ENCODE measurements at regions of chr16 and their contacts with region 1.

Region 1: DNA sequence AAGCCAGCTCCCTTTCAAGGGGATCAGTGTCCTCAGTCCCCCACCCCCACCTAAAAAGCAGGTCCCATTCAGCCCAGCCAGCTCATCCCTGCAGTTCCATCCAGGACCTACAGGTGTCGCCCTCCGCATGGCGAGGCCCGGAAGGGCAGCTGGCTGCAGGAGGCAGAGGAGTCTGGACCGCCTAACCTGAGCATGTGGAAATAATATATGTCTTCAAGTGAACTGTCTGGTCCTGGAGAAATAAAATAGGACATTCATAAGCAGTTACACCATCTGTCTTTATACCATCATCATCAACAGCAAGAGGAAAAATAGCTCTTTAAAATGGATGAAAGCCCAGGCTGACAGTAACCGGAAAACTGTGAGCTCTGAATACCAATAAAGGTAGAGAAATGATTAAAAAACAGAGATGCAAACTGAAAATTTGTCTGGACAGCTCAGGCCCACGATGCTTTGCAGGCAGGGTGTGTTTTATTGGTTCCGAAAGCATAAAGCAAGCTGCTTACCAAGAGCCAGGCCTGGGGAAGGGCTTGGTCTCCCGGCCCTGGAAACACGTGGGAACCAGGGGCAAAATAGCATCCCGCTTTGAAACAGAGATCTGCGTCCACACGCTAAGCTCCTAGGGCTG is 215.2 kb downstream of the ZFHX3 start:
- DNase-seq: peak; percentile 52
- H3K4me3 ChIP-seq: no peak overlapping the region
- H3K27ac ChIP-seq: no peak overlapping the region
- H3K4me1 ChIP-seq: peaks cover 6% of the 10 kb centered on the region
- H3K27me3 ChIP-seq: no peaks in the 10 kb centered on the region
- CTCF ChIP-seq: peak; percentile 98 to 99

Region 2: GRCh38 chr16:72241930-72242329 is 590.8 kb before region 1 on chr16:
- CTCF ChIA-PET with region 1: no interaction called
- dilution Hi-C with region 1: no loop called
- in situ Hi-C with region 1: no loop called
- intact Hi-C with region 1: loop called (anchors 5 kb)
- DNase-seq: peak; percentile 48
- H3K4me3 ChIP-seq: no peak overlapping the region
- H3K27ac ChIP-seq: no peak overlapping the region
- H3K4me1 ChIP-seq: peaks cover 4% of the 10 kb centered on the region
- H3K27me3 ChIP-seq: no peaks in the 10 kb centered on the region
- CTCF ChIP-seq: peak; percentile 94 to 97

Region 3: GRCh38 chr16:72764015-72764654 is 68.6 kb before region 1 on chr16:
- CTCF ChIA-PET with region 1: no interaction called
- dilution Hi-C with region 1: no loop called
- in situ Hi-C with region 1: no loop called
- intact Hi-C with region 1: no loop called
- DNase-seq: no peak
- H3K4me3 ChIP-seq: no peak overlapping the region
- H3K27ac ChIP-seq: no peak overlapping the region
- H3K4me1 ChIP-seq: no peaks in the 10 kb centered on the region
- H3K27me3 ChIP-seq: no peaks in the 10 kb centered on the region
- CTCF ChIP-seq: no peak

Region 4: GRCh38 chr16:72961121-72961763 is 128.5 kb after region 1 on chr16:
- CTCF ChIA-PET with region 1: no interaction called
- dilution Hi-C with region 1: no loop called
- in situ Hi-C with region 1: no loop called
- intact Hi-C with region 1: loop called (anchors 5 kb)
- DNase-seq: no peak
- H3K4me3 ChIP-seq: no peak overlapping the region
- H3K27ac ChIP-seq: no peak overlapping the region
- H3K4me1 ChIP-seq: no peaks in the 10 kb centered on the region
- H3K27me3 ChIP-seq: no peaks in the 10 kb centered on the region
- CTCF ChIP-seq: peak; percentile 42 to 46

Region 5: GRCh38 chr16:73010150-73010676 is 177.5 kb after region 1 on chr16:
- CTCF ChIA-PET with region 1: interaction called, 15 read pairs
- dilution Hi-C with region 1: no loop called
- in situ Hi-C with region 1: no loop called
- intact Hi-C with region 1: no loop called
- DNase-seq: no peak
- H3K4me3 ChIP-seq: no peak overlapping the region
- H3K27ac ChIP-seq: no peak overlapping the region
- H3K4me1 ChIP-seq: peaks cover 1% of the 10 kb centered on the region
- H3K27me3 ChIP-seq: no peaks in the 10 kb centered on the region
- CTCF ChIP-seq: no peak

Region 6: GRCh38 chr16:73058221-73058615 is 225.5 kb after region 1 on chr16:
- CTCF ChIA-PET with region 1: interaction called, 5 read pairs
- dilution Hi-C with region 1: no loop called
- in situ Hi-C with region 1: no loop called
- intact Hi-C with region 1: loop called (anchors 2 kb)
- DNase-seq: peak; percentile 54
- H3K4me3 ChIP-seq: peak overlapping the region; percentile 55 to 64 (median 61)
- H3K27ac ChIP-seq: no peak overlapping the region
- H3K4me1 ChIP-seq: peaks cover 47% of the 10 kb centered on the region
- H3K27me3 ChIP-seq: no peaks in the 10 kb centered on the region
- CTCF ChIP-seq: no peak

Region 7: DNA sequence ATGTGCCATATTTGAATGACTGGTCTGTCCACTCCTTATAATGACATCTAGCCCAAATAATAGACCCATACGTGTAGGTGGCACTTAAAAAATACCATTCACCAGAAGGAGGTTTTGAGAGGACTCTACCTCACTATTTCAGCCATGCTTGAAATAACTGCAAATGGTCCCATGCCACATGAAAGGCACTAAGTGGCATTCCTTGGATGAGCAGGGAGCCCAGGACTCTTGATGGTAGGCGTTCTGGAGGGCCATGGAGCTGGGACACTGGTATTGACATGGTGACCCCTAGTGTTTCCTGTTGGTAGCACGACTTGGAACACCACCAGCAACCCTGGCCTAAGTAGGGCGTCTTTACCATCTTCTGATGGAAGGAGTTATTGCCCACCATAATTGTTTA is 363.9 kb after region 1 on chr16:
- CTCF ChIA-PET with region 1: interaction called, 13 read pairs
- dilution Hi-C with region 1: no loop called
- in situ Hi-C with region 1: loop called (anchors 10 kb)
- intact Hi-C with region 1: loop called (anchors 1 kb)
- DNase-seq: peak; percentile 43
- H3K4me3 ChIP-seq: no peak overlapping the region
- H3K27ac ChIP-seq: no peak overlapping the region
- H3K4me1 ChIP-seq: no peaks in the 10 kb centered on the region
- H3K27me3 ChIP-seq: no peaks in the 10 kb centered on the region
- CTCF ChIP-seq: peak; percentile 81 to 87

Region 8: GRCh38 chr16:73420676-73421075 is 587.9 kb after region 1 on chr16:
- CTCF ChIA-PET with region 1: no interaction called
- dilution Hi-C with region 1: no loop called
- in situ Hi-C with region 1: no loop called
- intact Hi-C with region 1: no loop called
- DNase-seq: no peak
- H3K4me3 ChIP-seq: no peak overlapping the region
- H3K27ac ChIP-seq: no peak overlapping the region
- H3K4me1 ChIP-seq: no peaks in the 10 kb centered on the region
- H3K27me3 ChIP-seq: no peaks in the 10 kb centered on the region
- CTCF ChIP-seq: no peak